ENCODE measurements at regions of chr15 and their contacts with region 1.

Region 1: GRCh38 chr15:101277038-101277882 is at the start of gene SELENOS:
- H3K4me3 Mint-ChIP-seq: peak within 1 kb of the TSS; percentile 97
- H3K27ac Mint-ChIP-seq: peak within 1 kb of the TSS; percentile 89
- H3K4me1 Mint-ChIP-seq: peaks cover 14% of the 10 kb centered on the region
- H3K27me3 Mint-ChIP-seq: no peaks in the 10 kb centered on the region

Region 2: DNA sequence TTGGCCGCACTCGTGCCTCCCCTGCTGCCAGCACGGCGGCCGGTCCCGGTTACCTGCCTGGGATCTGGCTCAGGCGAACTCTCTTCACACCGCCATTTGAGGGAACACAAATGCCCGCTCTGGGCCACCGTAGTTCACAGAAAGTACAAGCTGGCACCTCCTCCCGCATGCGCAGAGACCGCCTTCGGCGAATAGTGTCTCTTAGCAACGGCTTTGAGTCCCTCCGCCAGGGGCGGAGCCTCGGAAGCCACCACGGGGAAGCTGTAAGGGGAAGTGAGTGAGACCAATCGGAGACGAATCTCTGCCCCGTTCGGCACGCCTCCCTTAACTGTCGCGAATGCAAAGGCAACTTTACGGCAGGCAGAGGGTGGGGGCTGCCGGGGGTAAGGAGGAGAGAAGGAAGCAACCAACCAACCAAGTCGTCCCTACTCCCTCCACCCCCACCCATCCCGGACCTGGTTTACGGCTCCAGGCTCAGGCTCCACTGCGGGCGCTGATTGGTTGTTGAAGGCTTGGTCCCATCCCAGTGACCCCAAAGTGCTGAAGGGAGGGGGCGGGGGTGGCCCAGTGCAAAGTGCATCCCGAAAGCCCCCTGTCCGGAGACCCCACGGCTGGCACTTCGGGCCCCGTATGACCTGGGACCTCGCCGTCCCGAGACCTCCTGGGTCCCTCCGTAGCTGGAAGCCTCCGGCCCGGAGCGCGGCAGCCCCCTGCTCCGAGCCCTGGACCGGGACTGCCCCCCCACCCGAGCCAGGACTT is 675.0 kb before region 1 on chr15 and contains the starts of genes ASB7 and LINS1:
- intact Hi-C with region 1: loop called (anchors 5 kb)
- H3K4me3 Mint-ChIP-seq: no peak within 1 kb of the TSS
- H3K27ac Mint-ChIP-seq: no peak within 1 kb of the TSS
- H3K4me1 Mint-ChIP-seq: peaks cover 32% of the 10 kb centered on the region
- H3K27me3 Mint-ChIP-seq: no peaks in the 10 kb centered on the region

Region 3: DNA sequence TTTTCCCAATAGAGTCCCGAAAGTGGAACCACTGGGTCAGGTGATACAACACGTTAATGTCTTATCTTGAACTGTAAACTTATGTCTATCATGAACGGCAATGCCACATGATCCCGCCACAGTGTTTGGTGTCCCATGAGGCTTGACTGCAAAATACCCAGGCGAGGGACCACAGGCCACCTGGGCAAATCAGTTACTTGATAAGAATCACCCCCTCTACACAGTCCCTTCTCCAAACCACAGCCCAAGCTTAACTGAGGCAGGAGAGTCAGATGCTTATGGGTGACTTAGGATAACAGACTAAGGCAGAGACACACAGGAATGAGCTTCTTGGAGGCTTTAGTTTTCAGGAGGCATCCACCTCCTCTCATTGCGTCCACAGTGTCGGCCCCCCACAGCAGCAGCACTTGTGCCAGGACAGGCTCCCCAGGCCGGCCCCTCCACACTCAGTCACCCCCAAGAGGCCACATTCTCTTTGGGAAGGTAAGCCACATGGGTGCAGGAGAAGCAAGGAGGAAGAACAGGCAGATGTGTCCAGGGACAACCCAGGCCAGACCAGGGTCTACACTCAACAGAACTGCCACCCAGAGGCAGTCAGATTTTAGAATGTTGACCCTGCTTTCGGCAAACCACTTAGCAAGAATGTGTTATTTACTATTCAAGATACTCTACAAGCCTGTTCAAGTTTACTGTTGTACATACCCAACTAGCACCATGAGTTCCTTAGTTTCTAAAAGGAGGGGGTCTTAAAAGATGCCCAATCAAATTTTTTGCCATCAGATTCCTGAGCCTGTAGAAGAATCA is 60.9 kb after region 1 on chr15:
- intact Hi-C with region 1: no loop called
- H3K4me3 Mint-ChIP-seq: no peak overlapping the region
- H3K27ac Mint-ChIP-seq: no peak overlapping the region
- H3K4me1 Mint-ChIP-seq: peaks cover 5% of the 10 kb centered on the region
- H3K27me3 Mint-ChIP-seq: peaks cover 37% of the 10 kb centered on the region

Region 4: DNA sequence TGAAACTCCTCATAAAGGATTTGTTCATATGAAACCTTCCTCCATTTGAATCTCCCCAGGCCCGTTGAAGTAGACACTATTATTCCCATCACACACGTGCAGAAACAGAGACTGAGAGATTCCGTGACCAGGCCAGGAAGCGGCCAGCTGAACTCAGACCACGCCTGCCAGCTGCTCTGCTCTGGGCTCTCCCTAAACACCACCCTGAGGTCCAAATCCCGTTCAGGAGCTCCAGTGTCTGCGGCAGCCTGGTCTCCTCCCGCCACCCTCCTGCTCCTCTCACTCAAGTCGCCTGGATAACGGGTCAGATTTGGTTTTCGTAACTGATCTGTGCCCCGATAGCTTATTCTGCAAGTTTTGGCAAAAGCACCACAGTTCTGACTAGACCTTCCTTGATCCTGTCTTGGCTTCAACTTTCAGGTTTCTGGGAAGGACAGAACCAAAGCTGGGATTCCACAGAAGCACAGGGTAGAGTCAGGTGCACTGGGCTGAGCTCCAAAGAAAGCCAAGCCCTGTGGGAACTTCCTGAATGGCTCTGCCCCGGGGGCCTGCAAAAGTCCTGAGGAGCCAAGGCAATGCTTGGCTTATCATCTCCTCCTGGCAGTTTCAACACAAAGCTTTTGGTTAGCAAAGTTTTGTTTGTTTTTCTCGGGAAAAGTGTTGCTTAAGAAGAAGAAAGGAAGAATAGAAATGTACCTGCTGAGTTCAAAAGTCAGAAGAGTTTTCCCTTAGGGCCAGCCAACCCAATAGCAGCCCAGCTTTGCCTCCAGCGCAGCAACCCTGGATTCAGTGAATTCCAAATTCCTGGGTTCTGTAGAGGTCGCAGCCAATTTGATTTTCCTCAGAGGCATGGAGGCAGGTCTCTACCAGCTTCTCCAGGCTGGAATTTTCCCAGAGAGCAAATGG is 71.6 kb after region 1 on chr15:
- intact Hi-C with region 1: no loop called
- H3K4me3 Mint-ChIP-seq: no peak overlapping the region
- H3K27ac Mint-ChIP-seq: no peak overlapping the region
- H3K4me1 Mint-ChIP-seq: no peaks in the 10 kb centered on the region
- H3K27me3 Mint-ChIP-seq: peaks cover 38% of the 10 kb centered on the region

Region 5: DNA sequence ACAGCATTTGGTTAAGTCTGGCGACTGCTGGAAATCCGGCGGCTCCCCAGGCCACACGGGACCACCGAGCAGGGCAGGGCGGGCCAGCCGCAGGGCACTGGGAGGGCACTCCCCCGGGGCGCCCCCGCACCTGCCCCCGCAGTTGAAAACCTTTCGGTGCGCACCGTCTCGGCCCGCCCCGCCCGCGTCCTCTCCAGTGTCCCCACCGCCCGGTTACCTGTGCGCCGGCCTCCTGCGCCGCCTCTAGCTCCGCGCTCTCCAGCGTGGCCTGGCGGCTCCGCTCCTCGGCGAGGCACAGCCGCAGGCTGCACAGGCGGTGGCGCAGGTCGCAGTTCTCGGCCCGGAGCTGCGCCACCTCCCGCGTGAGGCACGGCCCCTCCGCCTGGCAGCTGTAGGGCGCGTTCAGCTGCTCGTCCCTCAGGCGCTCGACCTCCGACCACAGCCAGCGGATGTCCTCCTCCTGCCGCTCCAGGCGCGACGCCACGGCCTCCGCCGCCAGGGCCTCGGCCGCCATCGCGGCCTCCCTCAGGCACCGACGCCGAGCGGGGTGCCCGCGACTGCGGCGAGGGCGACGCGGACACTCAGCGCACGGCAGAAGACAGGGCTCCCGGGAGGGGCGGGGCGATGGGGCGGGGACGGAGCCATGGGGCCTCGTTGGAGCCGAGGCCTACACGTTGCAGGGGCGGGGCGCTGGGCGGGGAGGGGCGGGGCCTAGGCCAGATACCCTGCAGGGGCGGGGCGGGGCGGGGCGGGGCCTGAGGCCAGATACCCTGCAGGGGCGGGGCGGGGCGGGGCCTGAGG is 446.8 kb after region 1 on chr15 and contains the start of gene TARS3:
- intact Hi-C with region 1: loop called (anchors 5 kb)
- H3K4me3 Mint-ChIP-seq: peak within 1 kb of the TSS; percentile 79
- H3K27ac Mint-ChIP-seq: peak within 1 kb of the TSS; percentile 80
- H3K4me1 Mint-ChIP-seq: peaks cover 9% of the 10 kb centered on the region
- H3K27me3 Mint-ChIP-seq: no peaks in the 10 kb centered on the region

Measured in dendritic cell treated with granulocyte-macrophage colony-stimulating factor and Interleukin-4, amounts not matched to agents 40 ng/mL and 50 ng/mL, for 4 days (primary cell).